Sciatic nerve (tissue), 2 donors: ENCODE measurements at regions of chr4 and their contacts with region 1.

Region 1: DNA sequence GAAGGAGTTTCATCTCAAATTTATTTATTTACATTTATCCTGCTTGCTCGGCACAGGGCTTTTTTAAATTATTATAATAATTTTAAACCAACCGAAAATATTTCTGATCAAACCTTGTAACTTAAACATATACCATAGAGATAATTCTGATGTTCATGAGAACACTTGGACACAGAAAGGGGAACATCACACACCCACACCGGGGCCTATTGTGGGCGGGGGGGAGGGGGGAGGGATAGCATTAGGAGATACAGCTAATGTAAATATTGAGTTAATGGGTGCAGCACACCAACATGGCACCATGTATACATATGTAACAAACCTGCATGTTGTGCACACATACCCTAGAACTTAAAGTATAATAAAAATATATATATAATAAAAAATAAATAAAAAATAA is 2.9 kb downstream of the ANXA5 start:
- DNase-seq: no peak
- ATAC-seq: no peak

Region 2: GRCh38 chr4:120238277-120238973 is 1455.5 kb before region 1 on chr4:
- intact Hi-C with region 1: no loop called
- DNase-seq: no peak
- ATAC-seq: peak; percentile 22

Region 3: GRCh38 chr4:121411151-121411744 is 282.6 kb before region 1 on chr4:
- intact Hi-C with region 1: no loop called
- DNase-seq: no peak
- ATAC-seq: no peak

Region 4: GRCh38 chr4:121712001-121712651 is 18.2 kb after region 1 on chr4:
- intact Hi-C with region 1: loop called (anchors 2 kb)
- DNase-seq: no peak
- ATAC-seq: peak; percentile 57